GM10248 (cell line): ENCODE measurements at regions of chr2 and their contacts with region 1.

Region 1: GRCh38 chr2:38508311-38509039 is 94.3 kb downstream of the HNRNPLL start:
- DNase-seq: peak; percentile 78
- CTCF ChIP-seq: peak; percentile 80

Region 2: DNA sequence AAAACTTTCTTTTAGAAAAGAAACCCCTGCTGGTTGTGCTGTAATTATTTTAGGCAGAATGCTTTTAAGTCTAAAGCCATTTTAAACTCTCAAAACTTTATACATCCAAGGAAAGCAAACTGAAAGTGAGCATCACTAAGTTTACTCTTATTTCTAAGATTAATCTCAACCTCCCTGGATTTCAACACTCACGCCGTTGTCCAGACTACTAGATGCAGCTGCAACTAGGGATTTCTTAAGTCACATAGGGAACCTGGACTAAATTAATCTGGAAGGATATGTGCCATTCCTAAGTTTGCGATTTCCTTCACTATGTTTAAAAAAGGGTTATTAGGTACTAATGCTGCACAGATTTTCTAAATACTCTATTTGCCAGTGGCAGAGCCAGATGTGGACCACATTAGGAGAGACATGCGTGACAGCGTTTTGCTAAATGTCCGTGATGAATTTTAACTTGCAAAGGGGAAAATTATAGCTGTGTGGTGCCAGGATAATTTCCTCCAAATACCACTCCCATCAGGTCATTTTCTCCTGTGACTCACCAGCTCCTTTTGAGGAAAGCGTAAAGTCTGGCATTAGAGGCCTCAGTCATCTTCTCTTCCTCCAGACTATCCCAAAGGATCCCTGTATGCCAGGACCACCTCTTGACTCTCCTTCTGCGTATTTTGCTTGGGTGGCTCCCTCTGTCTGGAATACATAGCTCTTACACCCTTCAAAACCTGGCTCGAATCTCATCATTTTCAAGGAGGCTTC is 275.1 kb before region 1 on chr2:
- CTCF ChIA-PET with region 1: no interaction called
- POLR2A ChIA-PET with region 1: no interaction called
- DNase-seq: no peak
- CTCF ChIP-seq: no peak

Region 3: DNA sequence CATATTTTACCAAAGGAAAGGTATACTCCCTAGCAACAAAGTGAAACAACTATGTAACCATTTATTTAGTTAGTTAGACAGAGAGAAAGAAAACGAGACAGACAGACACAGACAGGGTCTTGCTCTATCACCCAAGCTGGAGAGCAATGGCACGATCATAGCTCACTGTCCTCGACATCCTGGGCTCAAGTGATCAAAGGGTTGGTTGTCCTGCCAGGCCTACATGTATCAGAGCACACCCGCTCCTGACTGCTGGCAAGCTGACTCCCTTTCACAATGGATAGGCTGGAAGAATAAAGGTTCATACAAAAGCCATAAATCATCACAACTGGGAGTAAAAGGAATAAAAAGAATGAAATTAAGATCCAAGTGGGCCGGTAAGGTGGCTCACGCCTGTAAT is 184.9 kb before region 1 on chr2:
- CTCF ChIA-PET with region 1: interaction called, 119 read pairs
- POLR2A ChIA-PET with region 1: no interaction called
- DNase-seq: no peak
- CTCF ChIP-seq: no peak

Region 4: DNA sequence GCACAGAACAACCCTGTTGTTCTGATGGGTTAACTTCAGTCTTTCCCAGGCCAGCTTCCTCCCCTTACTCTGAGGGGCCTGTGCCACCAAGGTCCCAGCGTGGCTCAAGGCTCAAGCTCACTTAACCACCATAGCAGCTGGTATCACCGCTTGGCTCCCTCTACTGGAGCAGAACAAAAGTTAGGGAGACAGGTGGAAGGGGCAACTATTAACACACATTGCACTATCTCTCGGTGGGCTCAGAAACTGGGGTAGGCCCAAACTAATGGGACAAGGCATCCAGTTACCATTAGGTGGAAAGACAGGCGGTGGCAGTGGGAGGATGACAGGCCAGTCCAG is 42.7 kb before region 1 on chr2:
- CTCF ChIA-PET with region 1: interaction called, 28 read pairs
- POLR2A ChIA-PET with region 1: no interaction called
- DNase-seq: peak; percentile 67
- CTCF ChIP-seq: peak; percentile 59

Region 5: DNA sequence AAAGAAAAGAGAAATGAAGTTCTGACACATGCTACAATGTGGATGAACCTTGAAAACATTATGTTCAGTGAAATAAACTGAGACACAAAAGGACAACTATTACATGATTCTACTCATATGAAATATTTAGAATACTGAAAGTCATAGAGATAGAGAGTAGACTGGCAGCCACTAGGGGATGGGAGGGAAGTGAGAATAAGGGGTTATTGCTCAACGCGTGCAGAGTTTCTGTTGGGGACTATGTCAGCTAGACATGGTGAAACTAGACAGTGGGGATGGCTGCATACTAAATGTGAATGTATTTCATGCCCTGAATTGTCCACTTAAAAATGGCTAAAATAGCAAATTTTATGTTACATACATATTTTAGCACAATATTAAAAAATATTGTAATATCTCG is 22.7 kb before region 1 on chr2:
- CTCF ChIA-PET with region 1: interaction called, 10 read pairs
- POLR2A ChIA-PET with region 1: no interaction called
- DNase-seq: peak; percentile 71
- CTCF ChIP-seq: peak; percentile 15

Region 6: GRCh38 chr2:38528008-38528442 is 19.6 kb after region 1 on chr2:
- CTCF ChIA-PET with region 1: interaction called, 13 read pairs
- POLR2A ChIA-PET with region 1: no interaction called
- DNase-seq: no peak
- CTCF ChIP-seq: peak; percentile 24